PC-9 (cell line): ENCODE measurements at regions of chr13 and their contacts with region 1.

Region 1: DNA sequence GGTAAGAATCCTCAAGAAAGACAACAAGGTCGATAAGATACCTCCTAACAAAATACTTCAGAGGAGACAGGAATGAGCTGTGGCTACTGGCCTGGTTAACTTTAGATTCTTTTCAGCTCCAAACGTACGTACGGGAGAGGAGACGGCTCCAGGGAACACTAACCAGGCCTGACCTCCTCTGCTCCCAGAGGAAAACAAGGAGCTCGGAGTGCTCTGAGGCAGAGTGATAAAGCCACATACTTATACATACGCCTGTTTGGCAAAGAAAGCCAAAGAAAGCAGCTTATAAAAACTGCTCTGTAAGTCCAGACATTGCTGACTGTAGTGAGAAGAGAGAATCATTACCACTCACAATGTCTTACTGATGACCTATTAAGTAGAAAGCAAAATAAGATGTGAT is 263.9 kb downstream of the MZT1 start:
- DNase-seq: no peak
- H3K4me3 ChIP-seq: no peak overlapping the region
- H3K27ac ChIP-seq: no peak overlapping the region
- H3K4me1 ChIP-seq: no peaks in the 10 kb centered on the region
- H3K27me3 ChIP-seq: no peaks in the 10 kb centered on the region
- CTCF ChIP-seq: no peak

Region 2: DNA sequence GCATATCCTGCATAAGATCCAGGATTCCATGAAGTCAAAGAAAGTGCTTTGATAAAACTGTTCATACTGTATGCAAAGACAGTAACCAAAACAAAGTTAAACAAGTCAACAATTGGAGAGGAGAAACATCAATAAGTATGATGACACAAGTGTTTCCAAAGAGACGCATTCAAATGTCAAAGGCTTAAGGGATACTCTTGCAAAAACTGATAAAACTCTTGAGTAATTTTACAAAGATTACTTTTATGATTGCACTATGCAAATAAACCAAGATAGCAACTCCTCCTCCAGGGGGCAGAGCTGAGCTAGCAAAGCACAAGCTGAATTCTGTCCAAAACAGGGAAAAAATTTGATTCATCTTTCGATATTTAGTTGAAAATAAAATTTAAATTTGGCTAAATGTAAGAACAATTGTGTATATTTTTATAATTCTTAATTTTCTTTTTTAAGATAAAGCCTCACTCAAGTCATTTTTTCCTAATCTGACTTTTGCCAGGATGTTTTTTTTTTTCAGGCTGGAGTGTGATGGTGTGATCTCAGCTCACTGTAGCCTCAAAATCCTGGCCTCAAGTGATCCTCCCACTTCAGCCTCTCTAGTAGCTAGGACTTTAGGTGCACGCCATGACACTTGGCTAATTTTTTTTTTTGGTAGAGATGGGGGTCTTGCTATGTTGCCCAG is 179.9 kb after region 1 on chr13:
- CTCF ChIA-PET with region 1: no interaction called
- POLR2A ChIA-PET with region 1: no interaction called
- intact Hi-C with region 1: no loop called
- DNase-seq: peak; percentile 29 to 51
- H3K4me3 ChIP-seq: no peak overlapping the region
- H3K27ac ChIP-seq: no peak overlapping the region
- H3K4me1 ChIP-seq: no peaks in the 10 kb centered on the region
- H3K27me3 ChIP-seq: no peaks in the 10 kb centered on the region
- CTCF ChIP-seq: peak; percentile 71

Region 3: DNA sequence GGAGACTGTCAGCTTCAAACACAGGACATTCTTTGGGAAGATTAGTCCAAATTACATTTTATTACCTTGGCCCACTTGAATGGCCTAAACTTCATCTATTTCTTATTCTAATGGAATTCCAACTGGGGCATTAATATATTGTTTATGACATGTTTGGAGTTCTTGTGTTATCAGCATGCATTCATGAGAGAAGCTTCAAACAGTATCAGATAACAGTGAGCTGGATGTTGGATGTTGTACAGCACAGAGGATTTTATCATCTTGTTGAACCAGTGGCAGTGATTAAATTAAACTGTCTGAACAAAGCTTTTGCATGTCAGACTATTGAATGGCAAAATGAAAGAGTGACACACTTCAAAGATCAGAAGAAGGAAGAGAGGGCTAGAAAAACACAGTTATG is 213.9 kb after region 1 on chr13:
- CTCF ChIA-PET with region 1: no interaction called
- POLR2A ChIA-PET with region 1: no interaction called
- intact Hi-C with region 1: no loop called
- DNase-seq: no peak
- H3K4me3 ChIP-seq: no peak overlapping the region
- H3K27ac ChIP-seq: no peak overlapping the region
- H3K4me1 ChIP-seq: no peaks in the 10 kb centered on the region
- H3K27me3 ChIP-seq: 0 out of 2 replicates have a peak, but pooled peaks cover 5% of the 10 kb centered on the region
- CTCF ChIP-seq: no peak

Region 4: DNA sequence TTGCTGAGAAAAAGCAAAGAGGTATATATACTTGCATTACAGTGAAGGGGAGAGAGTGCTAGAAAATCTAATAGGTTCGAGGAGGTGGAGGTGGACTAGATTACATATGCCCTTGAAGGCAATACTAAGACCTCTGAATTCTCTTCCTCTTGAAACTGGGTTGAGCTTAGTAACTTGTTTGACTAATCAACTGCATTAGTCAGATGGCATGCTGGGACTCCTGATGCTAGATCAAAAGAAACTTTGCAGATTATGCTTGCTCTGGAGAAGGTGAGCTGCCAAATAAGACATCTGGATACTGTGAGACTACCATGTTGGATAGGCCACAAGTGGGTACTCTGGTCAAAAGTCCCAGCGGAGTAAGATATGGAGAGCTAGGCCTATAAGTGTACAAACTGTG is 926.5 kb after region 1 on chr13:
- CTCF ChIA-PET with region 1: no interaction called
- POLR2A ChIA-PET with region 1: interaction called, 23 read pairs
- intact Hi-C with region 1: no loop called
- DNase-seq: no peak
- H3K4me3 ChIP-seq: no peak overlapping the region
- H3K27ac ChIP-seq: no peak overlapping the region
- H3K4me1 ChIP-seq: peaks cover 6% of the 10 kb centered on the region; the same call in 1 of the 2 replicates
- H3K27me3 ChIP-seq: no peaks in the 10 kb centered on the region
- CTCF ChIP-seq: no peak